WTC11 (cell line): ENCODE measurements at regions of chr1 and their contacts with region 1.

Region 1: GRCh38 chr1:202192770-202193613 is 607 bp upstream of the LGR6 start:
- DNase-seq: peak; percentile 89
- ATAC-seq: peak; percentile 68
- H3K4me3 Mint-ChIP-seq: peak overlapping the region; percentile 77
- H3K27ac Mint-ChIP-seq: no peak overlapping the region
- H3K4me1 Mint-ChIP-seq: peaks cover 3% of the 10 kb centered on the region
- H3K27me3 Mint-ChIP-seq: peaks cover 38% of the 10 kb centered on the region
- CTCF ChIP-seq: peak; percentile 80

Region 2: GRCh38 chr1:202154766-202155477 is 38.1 kb before region 1 on chr1:
- CTCF ChIA-PET with region 1: interaction called, 32 read pairs
- POLR2A ChIA-PET with region 1: no interaction called
- DNase-seq: peak; percentile 74
- ATAC-seq: peak; percentile 88
- H3K4me3 Mint-ChIP-seq: no peak overlapping the region
- H3K27ac Mint-ChIP-seq: peak overlapping the region; percentile 89
- H3K4me1 Mint-ChIP-seq: peaks cover 22% of the 10 kb centered on the region
- H3K27me3 Mint-ChIP-seq: no peaks in the 10 kb centered on the region
- CTCF ChIP-seq: peak; percentile 56

Region 3: DNA sequence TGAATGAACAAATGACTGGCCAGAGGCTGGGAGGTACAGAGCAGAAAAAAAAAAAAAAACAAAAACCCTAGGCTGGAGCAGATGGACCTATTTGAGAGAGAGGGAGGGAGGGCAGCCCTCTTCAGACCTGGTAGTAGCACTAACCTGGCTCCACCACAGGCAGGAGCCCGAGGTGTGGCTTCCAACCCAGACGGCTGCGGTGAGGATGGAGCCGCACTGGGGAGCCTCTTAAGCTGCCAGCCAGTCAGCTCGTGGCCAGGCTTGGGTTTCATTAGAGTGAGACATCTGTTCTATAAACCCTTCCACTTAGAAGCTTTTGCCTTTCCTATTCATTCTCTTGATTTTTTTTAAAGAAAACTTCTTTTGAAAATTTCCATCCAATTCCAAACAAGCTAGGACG is 17.4 kb after region 1 on chr1:
- CTCF ChIA-PET with region 1: interaction called, 52 read pairs
- POLR2A ChIA-PET with region 1: interaction called, 3 read pairs
- DNase-seq: peak; percentile 50
- ATAC-seq: peak; percentile 33
- H3K4me3 Mint-ChIP-seq: no peak overlapping the region
- H3K27ac Mint-ChIP-seq: no peak overlapping the region
- H3K4me1 Mint-ChIP-seq: peaks cover 9% of the 10 kb centered on the region
- H3K27me3 Mint-ChIP-seq: peaks cover 11% of the 10 kb centered on the region
- CTCF ChIP-seq: no peak

Region 4: GRCh38 chr1:202306535-202307345 is 113.7 kb after region 1 on chr1:
- CTCF ChIA-PET with region 1: interaction called, 49 read pairs
- POLR2A ChIA-PET with region 1: no interaction called
- DNase-seq: no peak
- ATAC-seq: no peak
- H3K4me3 Mint-ChIP-seq: no peak overlapping the region
- H3K27ac Mint-ChIP-seq: no peak overlapping the region
- H3K4me1 Mint-ChIP-seq: no peaks in the 10 kb centered on the region
- H3K27me3 Mint-ChIP-seq: no peaks in the 10 kb centered on the region
- CTCF ChIP-seq: no peak

Region 5: GRCh38 chr1:202329891-202330290 is 136.9 kb after region 1 on chr1:
- CTCF ChIA-PET with region 1: interaction called, 11 read pairs
- POLR2A ChIA-PET with region 1: no interaction called
- DNase-seq: no peak
- ATAC-seq: peak; percentile 87
- H3K4me3 Mint-ChIP-seq: no peak overlapping the region
- H3K27ac Mint-ChIP-seq: peak overlapping the region; percentile 38; the same call in 1 of the 2 replicates
- H3K4me1 Mint-ChIP-seq: no peaks in the 10 kb centered on the region
- H3K27me3 Mint-ChIP-seq: no peaks in the 10 kb centered on the region
- CTCF ChIP-seq: peak; percentile 22; the same call in 1 of the 2 replicates